ENCODE measurements at regions of chr5 and their contacts with region 1.

Region 1: GRCh38 chr5:671459-672328 is 21.5 kb downstream of the TPPP start:
- DNase-seq: peak; percentile 74
- ATAC-seq: peak; percentile 72
- H3K4me3 ChIP-seq: peak overlapping the region; percentile 57
- H3K27ac ChIP-seq: peak overlapping the region; percentile 88
- H3K4me1 ChIP-seq: peaks cover 29% of the 10 kb centered on the region
- H3K27me3 ChIP-seq: no peaks in the 10 kb centered on the region
- CTCF ChIP-seq: peak; percentile 95

Region 2: DNA sequence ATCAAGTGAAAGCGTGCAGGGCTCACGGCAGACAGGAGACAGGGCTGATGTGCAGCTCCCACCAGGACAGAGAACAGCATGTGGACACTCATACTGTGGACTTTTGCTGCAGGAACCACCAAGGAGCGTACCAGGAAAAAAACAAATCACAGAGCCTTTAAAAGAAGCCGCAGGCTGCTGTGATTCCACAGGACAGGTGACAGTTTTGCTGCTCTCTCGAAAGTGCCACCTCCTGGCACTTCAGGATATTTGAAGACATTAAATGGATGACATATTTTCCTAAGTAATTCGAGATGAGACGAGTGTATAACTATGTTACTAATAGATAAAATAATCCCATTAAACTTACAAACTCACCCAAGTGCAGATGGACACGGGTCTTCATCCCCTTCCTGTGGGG is 149.8 kb after region 1 on chr5:
- CTCF ChIA-PET with region 1: no interaction called
- POLR2A ChIA-PET with region 1: no interaction called
- intact Hi-C with region 1: loop called (anchors 5 kb)
- DNase-seq: no peak
- ATAC-seq: peak; percentile 54; the same call in 1 of the 2 replicates
- H3K4me3 ChIP-seq: no peak overlapping the region
- H3K27ac ChIP-seq: no peak overlapping the region
- H3K4me1 ChIP-seq: no peaks in the 10 kb centered on the region
- H3K27me3 ChIP-seq: no peaks in the 10 kb centered on the region
- CTCF ChIP-seq: peak; percentile 40

Region 3: GRCh38 chr5:849651-850301 is 178.1 kb after region 1 on chr5:
- CTCF ChIA-PET with region 1: no interaction called
- POLR2A ChIA-PET with region 1: no interaction called
- intact Hi-C with region 1: loop called (anchors 5 kb)
- DNase-seq: peak; percentile 6
- ATAC-seq: peak; percentile 31
- H3K4me3 ChIP-seq: peak overlapping the region; percentile 73
- H3K27ac ChIP-seq: no peak overlapping the region
- H3K4me1 ChIP-seq: peaks cover 15% of the 10 kb centered on the region; the same call in 1 of the 2 replicates
- H3K27me3 ChIP-seq: no peaks in the 10 kb centered on the region
- CTCF ChIP-seq: no peak

Region 4: GRCh38 chr5:902129-902916 is 230.6 kb after region 1 on chr5:
- CTCF ChIA-PET with region 1: no interaction called
- POLR2A ChIA-PET with region 1: no interaction called
- intact Hi-C with region 1: loop called (anchors 2 kb)
- DNase-seq: no peak
- ATAC-seq: no peak
- H3K4me3 ChIP-seq: no peak overlapping the region
- H3K27ac ChIP-seq: no peak overlapping the region
- H3K4me1 ChIP-seq: no peaks in the 10 kb centered on the region
- H3K27me3 ChIP-seq: no peaks in the 10 kb centered on the region
- CTCF ChIP-seq: no peak

Measured in PC-3 (cell line).